ENCODE measurements at regions of chr2 and their contacts with region 1.

Region 1: DNA sequence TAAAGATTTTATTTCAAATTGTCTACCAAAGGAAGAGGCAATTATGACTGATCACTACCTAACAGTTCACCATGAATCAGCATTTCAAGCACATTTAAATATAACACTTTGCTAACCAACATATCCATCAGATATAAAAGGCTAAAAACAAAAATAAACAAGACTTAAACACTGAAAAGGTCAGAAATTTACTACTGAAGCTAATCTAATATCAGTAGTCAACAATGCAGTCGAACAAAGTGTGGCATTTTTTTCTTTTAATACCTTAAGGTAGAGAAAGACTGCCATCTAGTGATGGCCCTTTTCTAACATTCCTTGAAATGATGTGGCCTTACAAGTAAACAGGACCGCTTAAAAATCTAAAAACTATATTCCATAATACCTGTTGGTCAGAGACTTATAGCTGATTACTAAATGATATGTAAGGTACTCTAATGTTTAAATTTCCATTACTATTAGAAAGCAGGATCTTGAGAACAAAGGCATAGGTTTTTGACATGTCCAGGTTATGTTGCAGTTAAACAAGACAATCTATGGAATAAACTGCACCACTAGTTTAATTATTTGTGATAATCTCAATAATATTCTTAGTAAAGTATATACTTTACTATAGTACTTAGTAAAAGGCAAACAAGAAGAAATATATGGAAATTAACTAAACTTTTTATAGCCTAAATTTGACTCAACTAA is 80.0 kb downstream of the EXOC6B start:
- DNase-seq: peak; percentile 40 to 87
- ATAC-seq: peak; percentile 66 to 80; a peak in 4 of 6 replicates
- H3K4me3 ChIP-seq: no peak overlapping the region
- H3K27ac ChIP-seq: peak overlapping the region; percentile 46 to 58; a peak in 4 of 6 replicates
- H3K4me1 ChIP-seq: peaks cover 39% of the 10 kb centered on the region
- CTCF ChIP-seq: peak; percentile 98
- EP300 ChIP-seq: no peak
- POLR2A ChIP-seq: no peak
- RAD21 ChIP-seq: peak; percentile 98

Region 2: DNA sequence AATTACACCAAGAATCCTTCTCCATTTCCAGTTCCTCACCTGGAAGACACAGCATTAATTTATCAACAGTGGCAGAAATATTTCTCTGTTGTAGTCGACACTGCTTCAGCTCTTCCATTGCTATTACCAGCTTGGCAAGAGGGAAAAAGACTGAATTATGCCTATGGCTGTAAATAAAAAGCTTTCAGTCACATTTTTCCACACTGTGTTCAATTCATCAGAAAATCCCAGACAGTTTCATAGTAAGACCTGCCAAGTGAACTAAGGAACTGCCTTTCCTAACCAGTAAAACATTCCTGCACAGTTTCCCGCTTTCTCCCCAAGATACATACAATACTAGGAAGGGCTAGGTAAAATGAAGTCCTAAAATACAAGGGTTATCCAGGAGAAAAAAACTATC is 14.7 kb before region 1 on chr2:
- CTCF ChIA-PET with region 1: interaction called, 25 read pairs
- POLR2A ChIA-PET with region 1: no interaction called
- DNase-seq: no peak
- ATAC-seq: no peak
- H3K4me3 ChIP-seq: no peak overlapping the region
- H3K27ac ChIP-seq: no peak overlapping the region
- H3K4me1 ChIP-seq: 0 out of 3 replicates have a peak, but pooled peaks cover 3% of the 10 kb centered on the region
- CTCF ChIP-seq: no peak
- EP300 ChIP-seq: no peak
- POLR2A ChIP-seq: no peak
- RAD21 ChIP-seq: no peak

Region 3: GRCh38 chr2:72757177-72757775 is 11.5 kb after region 1 on chr2:
- CTCF ChIA-PET with region 1: interaction called, 12 read pairs
- POLR2A ChIA-PET with region 1: interaction called, 4 read pairs
- DNase-seq: peak; percentile 29 to 85
- ATAC-seq: peak; percentile 69 to 93; a peak in 5 of 6 replicates
- H3K4me3 ChIP-seq: no peak overlapping the region
- H3K27ac ChIP-seq: peak overlapping the region; percentile 73 to 74
- H3K4me1 ChIP-seq: peaks cover 40% of the 10 kb centered on the region
- CTCF ChIP-seq: no peak
- EP300 ChIP-seq: no peak; a peak in 1 of 5 replicates
- POLR2A ChIP-seq: no peak
- RAD21 ChIP-seq: no peak